ENCODE measurements at regions of chr11 and their contacts with region 1.

Region 1: GRCh38 chr11:15641271-15642045 is 526.7 kb downstream of the INSC start:
- DNase-seq: no peak
- ATAC-seq: no peak
- H3K4me3 ChIP-seq: no peak overlapping the region
- H3K4me3 Mint-ChIP-seq: no peak overlapping the region
- H3K27ac ChIP-seq: no peak overlapping the region
- H3K27ac Mint-ChIP-seq: no peak overlapping the region
- H3K4me1 ChIP-seq: no peaks in the 10 kb centered on the region
- H3K4me1 Mint-ChIP-seq: no peaks in the 10 kb centered on the region
- H3K27me3 ChIP-seq: no peaks in the 10 kb centered on the region
- H3K27me3 Mint-ChIP-seq: no peaks in the 10 kb centered on the region
- CTCF ChIP-seq: no peak

Region 2: GRCh38 chr11:15621565-15621964 is 19.9 kb before region 1 on chr11:
- CTCF ChIA-PET with region 1: no interaction called
- POLR2A ChIA-PET with region 1: no interaction called
- intact Hi-C with region 1: loop called in 1 of 2 experiments (anchors 1 kb)
- DNase-seq: no peak
- ATAC-seq: no peak
- H3K4me3 ChIP-seq: no peak overlapping the region
- H3K4me3 Mint-ChIP-seq: no peak overlapping the region
- H3K27ac ChIP-seq: no peak overlapping the region
- H3K27ac Mint-ChIP-seq: no peak overlapping the region
- H3K4me1 ChIP-seq: no peaks in the 10 kb centered on the region
- H3K4me1 Mint-ChIP-seq: no peaks in the 10 kb centered on the region
- H3K27me3 ChIP-seq: no peaks in the 10 kb centered on the region
- H3K27me3 Mint-ChIP-seq: peaks cover 3% of the 10 kb centered on the region
- CTCF ChIP-seq: no peak